ENCODE measurements at regions of chr16 and their contacts with region 1.

Region 1: GRCh38 chr16:83449861-83450260 is 357.9 kb upstream of the HSBP1 start:
- DNase-seq: no peak
- ATAC-seq: no peak
- H3K4me3 ChIP-seq: no peak overlapping the region
- H3K27ac ChIP-seq: no peak overlapping the region
- H3K4me1 ChIP-seq: no peaks in the 10 kb centered on the region
- H3K27me3 ChIP-seq: no peaks in the 10 kb centered on the region
- CTCF ChIP-seq: no peak
- POLR2A ChIP-seq: no peak

Region 2: GRCh38 chr16:82603784-82604411 is 846.0 kb before region 1 on chr16:
- intact Hi-C with region 1: loop called in 7 of 10 experiments (anchors 5 to 10 kb)
- DNase-seq: peak; percentile 45 to 67 (median 52)
- ATAC-seq: peak; percentile 56 to 93 (median 84)
- H3K4me3 ChIP-seq: no peak overlapping the region
- H3K27ac ChIP-seq: no peak overlapping the region
- H3K4me1 ChIP-seq: peaks cover 0 to 6% (median 0%) of the 10 kb centered on the region in 12 donors
- H3K27me3 ChIP-seq: no peaks in the 10 kb centered on the region
- CTCF ChIP-seq: peak; percentile 45 to 83 (median 74)
- POLR2A ChIP-seq: no peak

Region 3: GRCh38 chr16:83200005-83200779 is 249.7 kb before region 1 on chr16:
- intact Hi-C with region 1: loop called in 2 of 10 experiments (anchors 5 to 10 kb)
- DNase-seq: peak in 1 of 5 donors; percentile 29
- ATAC-seq: peak in 3 of 4 donors; percentile 76 to 80 (median 79)
- H3K4me3 ChIP-seq: no peak overlapping the region
- H3K27ac ChIP-seq: no peak overlapping the region
- H3K4me1 ChIP-seq: no peaks in the 10 kb centered on the region
- H3K27me3 ChIP-seq: no peaks in the 10 kb centered on the region
- CTCF ChIP-seq: peak in 7 of 12 donors; percentile 8 to 41 (median 27)
- POLR2A ChIP-seq: no peak

Measured in heart left ventricle (tissue), 16 donors.